Activated CD4-positive, alpha-beta T cell treated with anti-CD3 and anti-CD28 coated beads, Interleukin-2, amount 10 ng/mL, durations not matched to agents 24 days and 14 days (primary cell): ENCODE measurements at regions of chr3 and their contacts with region 1.

Region 1: DNA sequence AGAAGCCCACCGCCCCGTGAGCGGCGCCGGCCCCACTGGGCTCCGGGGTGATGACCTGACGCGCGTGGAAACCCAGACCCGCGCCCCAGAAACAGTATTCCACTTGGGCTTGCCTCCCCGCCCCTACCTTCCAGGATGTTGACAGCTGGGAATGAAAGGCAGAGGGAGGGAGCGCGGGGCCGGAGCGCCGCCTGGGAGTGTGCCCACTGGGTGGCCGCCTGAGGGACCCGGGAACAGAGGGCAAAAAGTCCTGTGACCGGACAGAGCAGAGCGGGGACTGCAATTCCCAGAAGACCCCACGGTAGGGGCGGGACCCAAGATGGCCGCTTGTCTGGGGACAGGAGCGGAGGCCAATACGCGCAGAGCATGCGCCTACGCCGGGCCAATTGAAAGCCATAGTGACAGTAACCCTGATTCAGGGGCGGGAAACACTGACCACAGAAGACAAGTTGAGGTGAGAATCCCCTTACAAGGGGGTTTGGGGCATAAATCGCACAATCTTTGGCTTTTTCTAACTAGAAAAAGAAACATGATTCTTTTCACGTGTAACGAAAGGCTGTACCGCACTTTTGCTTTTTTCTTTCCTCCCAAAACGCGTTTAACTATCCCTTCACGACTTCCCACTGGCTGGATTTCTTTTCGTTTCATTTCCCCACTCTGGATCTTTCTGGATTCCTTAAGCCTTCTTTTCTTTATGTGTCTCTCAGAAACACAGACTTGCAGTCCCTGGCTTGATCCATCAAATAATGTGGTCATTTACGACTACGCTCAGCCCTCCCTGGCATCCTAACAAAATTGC is at the start of gene FHIT:
- DNase-seq: peak; percentile 98
- H3K4me3 Mint-ChIP-seq: peak within 1 kb of the TSS; percentile 87
- H3K27ac Mint-ChIP-seq: peak within 1 kb of the TSS; percentile 89
- H3K4me1 Mint-ChIP-seq: peaks cover 19% of the 10 kb centered on the region
- H3K27me3 Mint-ChIP-seq: peaks cover 2% of the 10 kb centered on the region
- total RNA-seq, gene FHIT: 23.8 and 27.7 TPM in 2 replicates

Region 2: DNA sequence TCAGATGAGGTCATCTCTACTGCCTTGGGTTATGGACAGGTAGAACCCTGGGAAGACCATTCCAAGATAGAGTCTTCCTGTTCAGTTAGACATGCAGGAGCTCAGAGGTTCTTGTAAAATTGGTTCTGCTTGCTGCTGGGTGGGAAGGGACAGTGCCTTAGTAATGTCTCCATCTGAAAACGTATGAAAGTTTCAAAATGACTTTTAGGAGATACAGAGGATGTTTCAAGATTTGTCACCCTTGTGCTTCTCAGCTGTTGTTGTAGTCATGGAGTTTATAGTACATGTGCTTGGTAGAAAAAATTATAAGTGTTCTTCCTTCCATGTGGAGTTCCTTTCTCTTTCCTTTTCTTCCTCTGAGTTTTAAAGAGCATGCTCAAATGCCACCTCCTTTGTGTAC is 1316.3 kb before region 1 on chr3:
- intact Hi-C with region 1: loop called (anchors 5 kb)
- DNase-seq: peak; percentile 62
- H3K4me3 Mint-ChIP-seq: peak overlapping the region; percentile 58
- H3K27ac Mint-ChIP-seq: peak overlapping the region; percentile 88
- H3K4me1 Mint-ChIP-seq: peaks cover 28% of the 10 kb centered on the region
- H3K27me3 Mint-ChIP-seq: no peaks in the 10 kb centered on the region

Region 3: GRCh38 chr3:60017631-60018030 is 1233.7 kb before region 1 on chr3:
- intact Hi-C with region 1: loop called (anchors 1 kb)
- DNase-seq: peak; percentile 89
- H3K4me3 Mint-ChIP-seq: peak overlapping the region; percentile 73
- H3K27ac Mint-ChIP-seq: peak overlapping the region; percentile 94
- H3K4me1 Mint-ChIP-seq: peaks cover 51% of the 10 kb centered on the region
- H3K27me3 Mint-ChIP-seq: no peaks in the 10 kb centered on the region

Region 4: GRCh38 chr3:61111825-61112224 is 139.5 kb before region 1 on chr3:
- intact Hi-C with region 1: loop called (anchors 5 kb)
- DNase-seq: no peak
- H3K4me3 Mint-ChIP-seq: no peak overlapping the region
- H3K27ac Mint-ChIP-seq: no peak overlapping the region
- H3K4me1 Mint-ChIP-seq: peaks cover 14% of the 10 kb centered on the region
- H3K27me3 Mint-ChIP-seq: no peaks in the 10 kb centered on the region

Region 5: DNA sequence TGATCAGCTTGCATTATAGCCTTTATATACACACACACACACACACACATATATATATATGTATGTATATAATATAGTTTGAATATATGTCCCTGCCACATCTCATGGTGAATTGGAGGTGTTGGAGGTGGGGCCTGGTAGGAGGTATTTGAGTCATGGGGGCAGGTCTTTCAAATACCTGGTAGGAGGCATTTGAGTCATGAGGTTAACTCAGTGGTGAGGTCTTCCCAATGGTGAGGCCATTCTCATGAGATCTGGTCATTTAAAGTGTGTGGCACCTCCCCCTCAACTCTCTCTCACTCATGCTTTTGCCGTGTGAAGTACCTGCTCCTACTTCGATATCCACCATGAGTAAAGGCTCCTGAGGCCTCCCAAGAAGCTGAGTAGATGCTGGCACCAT is 27.3 kb after region 1 on chr3:
- intact Hi-C with region 1: no loop called
- DNase-seq: no peak
- H3K4me3 Mint-ChIP-seq: no peak overlapping the region
- H3K27ac Mint-ChIP-seq: no peak overlapping the region
- H3K4me1 Mint-ChIP-seq: no peaks in the 10 kb centered on the region
- H3K27me3 Mint-ChIP-seq: peaks cover 5% of the 10 kb centered on the region

Region 6: DNA sequence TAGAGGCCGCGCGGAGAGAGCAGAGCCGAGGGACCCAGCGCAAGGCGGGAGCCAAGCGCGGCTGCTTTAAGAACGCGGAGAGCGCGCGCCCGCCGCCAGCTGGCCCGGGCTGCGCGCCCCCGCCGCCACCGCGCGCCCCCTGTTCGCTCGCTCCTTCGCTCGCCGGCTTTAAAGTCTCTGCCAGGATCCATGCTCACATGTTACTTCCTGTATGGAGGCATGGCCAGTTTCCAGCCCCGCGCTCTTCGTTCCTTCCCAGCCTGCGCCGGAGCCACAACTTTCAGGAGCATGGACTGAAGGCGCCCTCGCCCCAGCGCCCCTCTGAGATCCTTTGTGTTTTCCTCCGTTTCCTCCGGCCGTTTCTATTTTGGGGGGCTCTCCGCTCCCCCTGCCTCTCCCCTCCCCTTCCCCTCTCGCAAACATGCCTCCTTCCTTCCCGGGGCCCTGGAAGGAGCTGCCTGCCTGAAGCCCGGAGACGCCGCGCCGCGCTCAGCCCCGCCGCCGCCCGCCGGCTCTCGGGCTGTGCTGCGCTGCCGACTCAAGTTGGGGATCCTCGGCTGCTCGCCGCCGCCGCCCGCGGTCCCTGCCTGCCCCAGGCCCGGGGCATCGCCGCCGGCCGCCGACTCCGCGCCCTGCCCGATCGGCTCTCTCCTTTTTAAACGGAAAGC is 310.1 kb after region 1 on chr3 and contains the start of gene PTPRG:
- intact Hi-C with region 1: loop called (anchors 2 kb)
- DNase-seq: peak; percentile 84
- H3K4me3 Mint-ChIP-seq: peak within 1 kb of the TSS; percentile 96
- H3K27ac Mint-ChIP-seq: peak within 1 kb of the TSS; percentile 74
- H3K4me1 Mint-ChIP-seq: peaks cover 16% of the 10 kb centered on the region
- H3K27me3 Mint-ChIP-seq: peaks cover 59% of the 10 kb centered on the region
- total RNA-seq, gene PTPRG: 4.2 and 4.6 TPM in 2 replicates